ENCODE measurements at regions of chr6 and their contacts with region 1.

Region 1: DNA sequence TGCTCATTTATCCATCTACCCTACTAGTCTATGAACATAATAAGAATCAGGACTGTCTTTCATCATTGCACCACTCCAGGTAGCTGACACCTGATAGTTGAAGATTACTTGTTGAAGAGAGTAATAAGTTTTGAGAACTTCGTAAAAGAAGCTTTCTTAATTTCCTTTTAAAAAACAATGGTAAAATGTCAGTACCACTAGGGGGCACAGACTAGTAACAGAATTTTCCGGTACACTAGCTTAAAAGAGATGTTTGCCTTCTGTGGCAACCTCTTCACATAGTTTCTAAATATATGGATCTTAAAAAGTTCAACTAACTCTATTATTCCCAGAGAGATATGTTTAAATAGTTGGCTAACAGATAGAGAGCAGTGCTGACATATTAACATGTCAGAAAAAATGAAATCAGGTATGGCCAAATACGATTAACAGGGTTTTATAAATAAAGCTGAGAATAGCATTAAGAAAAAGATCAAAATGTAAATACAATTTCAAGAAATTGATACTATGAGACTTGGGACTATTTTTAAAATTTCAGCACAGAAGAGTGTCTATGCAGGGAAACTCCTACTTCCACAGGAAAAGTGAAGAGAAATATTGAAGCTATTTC is 5.4 kb upstream of the KCNQ5 start:
- DNase-seq: no peak
- H3K4me3 ChIP-seq: no peak overlapping the region
- CTCF ChIP-seq: peak; percentile 42

Region 2: GRCh38 chr6:72296375-72296774 is 320.1 kb before region 1 on chr6:
- CTCF ChIA-PET with region 1: no interaction called
- POLR2A ChIA-PET with region 1: no interaction called
- DNase-seq: no peak
- H3K4me3 ChIP-seq: no peak overlapping the region
- CTCF ChIP-seq: no peak

Region 3: DNA sequence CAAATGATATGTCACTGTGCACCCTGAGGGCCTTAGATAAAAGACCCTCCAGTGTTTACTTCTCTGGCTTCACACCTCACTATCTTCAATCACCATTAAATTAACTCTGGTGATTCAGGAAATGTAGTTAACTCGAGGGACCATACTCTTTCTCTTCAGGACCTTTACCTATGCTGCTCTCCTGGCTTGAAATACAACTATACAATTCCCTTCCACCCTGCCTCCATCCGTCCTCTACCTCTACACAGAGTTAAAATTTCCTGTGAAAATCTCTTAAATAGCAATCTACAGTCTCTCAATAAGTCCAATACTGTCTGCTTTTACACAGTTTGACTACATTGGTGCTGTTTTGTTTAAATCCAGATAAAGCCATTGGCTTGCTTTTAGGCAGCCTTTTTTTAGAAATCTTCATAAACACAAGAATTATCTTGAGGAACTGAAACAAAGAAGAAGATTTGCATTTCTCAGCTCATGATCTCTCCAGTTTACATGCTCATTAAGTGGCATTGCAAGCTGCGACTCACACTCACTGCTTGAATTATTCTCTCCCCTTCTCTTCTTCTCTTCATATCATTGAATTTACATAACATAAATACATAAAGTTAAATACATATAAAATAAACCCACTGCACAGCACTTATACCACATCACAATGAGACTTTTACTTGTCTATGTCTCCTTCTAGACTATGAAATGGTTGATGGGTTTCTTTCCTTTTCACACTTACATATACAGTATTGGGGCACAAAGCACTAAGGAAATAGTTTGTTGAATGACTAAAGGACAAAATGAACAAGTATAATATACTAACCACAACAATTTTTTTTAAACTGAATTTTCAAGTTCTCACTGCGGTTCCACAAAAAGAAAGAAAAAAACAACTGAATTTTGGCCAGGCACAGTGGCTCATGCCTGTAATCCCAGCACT is 233.6 kb before region 1 on chr6:
- CTCF ChIA-PET with region 1: no interaction called
- POLR2A ChIA-PET with region 1: no interaction called
- DNase-seq: no peak
- H3K4me3 ChIP-seq: no peak overlapping the region
- CTCF ChIP-seq: no peak

Region 4: GRCh38 chr6:72580281-72580940 is 36.1 kb before region 1 on chr6:
- CTCF ChIA-PET with region 1: interaction called, 19 read pairs
- POLR2A ChIA-PET with region 1: no interaction called
- DNase-seq: peak; percentile 77
- H3K4me3 ChIP-seq: no peak overlapping the region
- CTCF ChIP-seq: peak; percentile 66

Region 5: GRCh38 chr6:72589096-72589495 is 27.4 kb before region 1 on chr6:
- CTCF ChIA-PET with region 1: interaction called, 16 read pairs
- POLR2A ChIA-PET with region 1: no interaction called
- DNase-seq: no peak
- H3K4me3 ChIP-seq: no peak overlapping the region
- CTCF ChIP-seq: no peak

Region 6: DNA sequence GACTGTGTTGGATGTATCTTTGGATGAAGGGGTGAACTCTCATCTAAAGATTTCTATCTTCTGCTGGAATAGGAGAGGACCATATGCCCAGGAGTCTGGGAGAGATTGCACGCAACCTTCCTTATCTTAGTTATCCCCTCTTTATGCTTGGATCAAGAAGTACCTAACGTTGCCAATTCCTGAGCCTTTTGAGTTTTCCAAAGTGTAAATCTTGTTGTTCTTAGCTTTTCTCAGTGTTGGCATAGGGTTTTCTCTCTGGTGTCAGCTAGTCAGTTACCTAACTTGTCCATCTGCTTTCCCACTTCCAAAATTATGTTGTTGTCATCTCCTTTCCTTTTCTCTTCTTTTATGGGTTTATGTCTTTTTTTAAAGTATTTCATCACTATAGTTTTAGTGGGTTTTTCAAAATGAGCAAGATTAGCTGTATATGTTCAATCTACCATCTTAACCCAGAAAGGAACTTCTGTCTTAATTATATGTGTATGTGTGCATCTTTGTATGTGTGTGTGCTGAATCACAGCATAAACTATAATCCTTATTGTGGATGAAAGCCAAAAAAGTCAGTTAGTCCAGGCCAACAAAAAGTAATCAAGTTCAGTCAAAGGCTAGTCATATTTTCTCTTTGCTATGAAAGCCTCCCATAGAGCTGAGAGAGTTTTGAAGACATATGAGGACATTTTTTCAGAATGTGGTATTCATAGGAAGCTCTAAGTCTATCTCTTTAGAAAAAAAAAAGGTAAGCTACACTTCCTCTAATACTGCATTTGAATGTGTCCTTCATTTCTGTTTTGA is 536.7 kb after region 1 on chr6:
- CTCF ChIA-PET with region 1: interaction called, 13 read pairs
- POLR2A ChIA-PET with region 1: no interaction called
- DNase-seq: peak; percentile 45
- H3K4me3 ChIP-seq: no peak overlapping the region
- CTCF ChIP-seq: no peak

Region 7: GRCh38 chr6:73180763-73181619 is 564.5 kb after region 1 on chr6:
- CTCF ChIA-PET with region 1: interaction called, 62 read pairs
- POLR2A ChIA-PET with region 1: no interaction called
- DNase-seq: peak; percentile 62
- H3K4me3 ChIP-seq: peak overlapping the region; percentile 44
- CTCF ChIP-seq: peak; percentile 74

Region 8: DNA sequence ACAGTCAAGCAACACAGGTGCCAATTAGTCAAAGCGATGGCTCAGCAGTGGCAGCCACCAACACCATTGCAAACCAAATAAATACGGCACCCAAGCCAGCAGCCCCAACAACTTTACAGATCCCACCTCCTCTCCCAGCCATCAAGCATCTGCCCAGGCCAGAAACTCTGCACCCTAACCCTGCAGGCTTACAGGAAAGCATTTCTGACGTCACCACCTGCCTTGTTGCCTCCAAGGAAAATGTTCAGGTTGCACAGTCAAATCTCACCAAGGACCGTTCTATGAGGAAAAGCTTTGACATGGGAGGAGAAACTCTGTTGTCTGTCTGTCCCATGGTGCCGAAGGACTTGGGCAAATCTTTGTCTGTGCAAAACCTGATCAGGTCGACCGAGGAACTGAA is 578.2 kb after region 1 on chr6:
- CTCF ChIA-PET with region 1: interaction called, 11 read pairs
- POLR2A ChIA-PET with region 1: no interaction called
- DNase-seq: no peak
- H3K4me3 ChIP-seq: no peak overlapping the region
- CTCF ChIP-seq: no peak

Measured in AG04449 (cell line).